ENCODE measurements at regions of chr3 and their contacts with region 1.

Region 1: DNA sequence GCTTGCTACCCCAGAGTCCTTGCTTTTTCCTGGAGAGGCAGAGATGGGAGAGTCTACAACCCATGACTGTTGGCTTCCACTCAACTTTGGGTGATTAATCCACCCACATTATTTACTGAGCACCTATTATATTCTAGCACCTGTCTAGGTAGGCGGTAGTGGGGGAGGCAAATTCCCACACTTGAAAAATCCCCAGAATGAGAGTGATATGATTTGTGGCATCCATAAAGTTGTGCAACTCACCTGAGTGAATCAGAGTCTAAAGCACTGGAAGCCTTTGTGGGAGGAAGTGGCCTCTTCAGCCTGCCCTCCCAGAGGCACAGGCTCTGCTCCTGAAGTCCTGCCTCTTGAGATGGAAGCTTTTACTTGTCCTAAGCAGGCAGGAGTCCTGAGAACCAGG is 40.4 kb upstream of the CTNNB1 start:
- DNase-seq: peak; percentile 26
- H3K4me3 Mint-ChIP-seq: no peak overlapping the region
- H3K27ac Mint-ChIP-seq: no peak overlapping the region
- H3K4me1 Mint-ChIP-seq: peaks cover 19% of the 10 kb centered on the region
- H3K27me3 Mint-ChIP-seq: no peaks in the 10 kb centered on the region

Region 2: DNA sequence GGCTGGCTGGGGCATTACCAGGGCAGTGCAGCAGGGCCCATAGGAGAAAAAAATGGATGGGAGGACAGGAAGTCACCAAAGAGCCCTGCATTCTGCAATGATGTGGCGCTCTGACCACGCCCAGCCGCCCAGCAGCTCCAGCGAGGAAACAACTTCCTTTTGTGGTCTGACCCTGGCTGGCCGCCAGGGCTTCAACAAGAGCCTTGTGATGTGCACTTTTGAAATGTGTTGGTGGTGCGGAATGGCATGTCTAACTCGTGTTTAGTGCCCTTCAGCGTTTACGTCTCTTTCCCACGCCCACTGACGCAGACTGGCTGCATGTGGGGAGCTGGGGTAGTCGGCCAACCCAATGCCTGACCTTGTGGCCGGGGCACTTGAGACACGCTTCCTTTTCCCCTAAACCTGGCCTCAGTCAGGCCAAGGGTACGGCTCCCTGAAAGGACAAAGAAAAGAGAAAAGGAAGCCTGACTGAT is 41.5 kb before region 1 on chr3:
- CTCF ChIA-PET with region 1: no interaction called
- POLR2A ChIA-PET with region 1: no interaction called
- intact Hi-C with region 1: loop called (anchors 1 kb)
- DNase-seq: peak; percentile 94
- H3K4me3 Mint-ChIP-seq: peak overlapping the region; percentile 16
- H3K27ac Mint-ChIP-seq: peak overlapping the region; percentile 78
- H3K4me1 Mint-ChIP-seq: peaks cover 24% of the 10 kb centered on the region
- H3K27me3 Mint-ChIP-seq: no peaks in the 10 kb centered on the region

Region 3: GRCh38 chr3:41190509-41191284 is 31.8 kb after region 1 on chr3:
- CTCF ChIA-PET with region 1: no interaction called
- POLR2A ChIA-PET with region 1: no interaction called
- intact Hi-C with region 1: loop called (anchors 2 kb)
- DNase-seq: peak; percentile 21
- H3K4me3 Mint-ChIP-seq: no peak overlapping the region
- H3K27ac Mint-ChIP-seq: no peak overlapping the region
- H3K4me1 Mint-ChIP-seq: peaks cover 29% of the 10 kb centered on the region
- H3K27me3 Mint-ChIP-seq: peaks cover 3% of the 10 kb centered on the region